Tibial artery (tissue), 4 donors: ENCODE measurements at regions of chr5 and their contacts with region 1.

Region 1: GRCh38 chr5:146671561-146672295 is 155.7 kb upstream of the GPR151 start:
- DNase-seq: no peak
- H3K4me3 ChIP-seq: no peak overlapping the region
- H3K27ac ChIP-seq: no peak overlapping the region
- H3K4me1 ChIP-seq: peaks cover 0 to 56% (median 6%) of the 10 kb centered on the region in 4 donors
- H3K27me3 ChIP-seq: no peaks in the 10 kb centered on the region
- CTCF ChIP-seq: no peak

Region 2: GRCh38 chr5:146690880-146691355 is 19.2 kb after region 1 on chr5:
- intact Hi-C with region 1: no loop called
- DNase-seq: no peak
- H3K4me3 ChIP-seq: no peak overlapping the region
- H3K27ac ChIP-seq: no peak overlapping the region
- H3K4me1 ChIP-seq: no peaks in the 10 kb centered on the region
- H3K27me3 ChIP-seq: no peaks in the 10 kb centered on the region
- CTCF ChIP-seq: no peak

Region 3: GRCh38 chr5:146878476-146879172 is 206.9 kb after region 1 on chr5 and contains the start of gene PPP2R2B:
- intact Hi-C with region 1: loop called (anchors 5 kb)
- DNase-seq: peak; percentile 36 to 83
- H3K4me3 ChIP-seq: peak within 1 kb of the TSS; percentile 93 to 94
- H3K27ac ChIP-seq: peak within 1 kb of the TSS; percentile 74 to 83
- H3K4me1 ChIP-seq: peaks cover 0 to 47% (median 14%) of the 10 kb centered on the region in 4 donors
- H3K27me3 ChIP-seq: no peaks in the 10 kb centered on the region
- CTCF ChIP-seq: no peak